GM12878 (cell line): ENCODE measurements at regions of chr2 and their contacts with region 1.

Region 1: DNA sequence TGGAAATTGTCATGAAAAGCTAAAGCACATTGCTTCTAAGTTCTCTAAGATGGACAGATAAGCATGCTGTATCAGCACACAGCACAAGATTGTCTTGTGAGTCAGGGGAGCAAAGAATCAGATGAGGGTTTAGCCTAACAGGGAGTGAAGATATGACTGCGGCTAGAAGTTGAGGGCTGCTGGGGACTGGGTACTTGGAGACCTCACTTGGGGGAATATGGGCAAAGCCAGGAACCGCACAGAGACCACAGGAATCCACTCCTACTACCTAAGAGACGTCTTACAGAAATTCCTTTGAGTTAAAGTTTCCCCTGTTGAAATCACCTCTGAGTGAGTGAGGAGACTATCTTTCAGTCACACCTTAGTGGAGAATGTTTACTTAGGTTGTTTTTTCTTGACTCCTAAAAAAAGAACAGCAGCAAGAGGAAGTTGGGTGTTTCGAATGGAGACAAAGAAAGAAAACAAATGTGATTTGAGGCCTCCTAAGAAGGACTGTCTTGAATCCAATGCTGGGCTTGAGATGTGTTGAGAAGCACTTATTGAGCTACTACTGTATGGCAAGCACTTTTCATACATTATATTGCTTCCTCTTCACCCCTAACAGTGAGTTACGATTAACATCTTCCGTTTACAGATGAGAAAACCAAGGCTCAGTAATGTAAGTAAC is 100.7 kb downstream of the ANKRD44 start:
- DNase-seq: peak; percentile 76
- ATAC-seq: peak; percentile 47
- H3K4me3 ChIP-seq: peak overlapping the region; percentile 28
- H3K27ac ChIP-seq: peak overlapping the region; percentile 97
- H3K4me1 ChIP-seq: peaks cover 94% of the 10 kb centered on the region
- H3K27me3 ChIP-seq: no peaks in the 10 kb centered on the region
- CTCF ChIP-seq: no peak
- EP300 ChIP-seq: peak in 1 of 2 experiments; percentile 21; a peak in 2 of 4 replicates
- POLR2A ChIP-seq: no peak
- RAD21 ChIP-seq: no peak

Region 2: DNA sequence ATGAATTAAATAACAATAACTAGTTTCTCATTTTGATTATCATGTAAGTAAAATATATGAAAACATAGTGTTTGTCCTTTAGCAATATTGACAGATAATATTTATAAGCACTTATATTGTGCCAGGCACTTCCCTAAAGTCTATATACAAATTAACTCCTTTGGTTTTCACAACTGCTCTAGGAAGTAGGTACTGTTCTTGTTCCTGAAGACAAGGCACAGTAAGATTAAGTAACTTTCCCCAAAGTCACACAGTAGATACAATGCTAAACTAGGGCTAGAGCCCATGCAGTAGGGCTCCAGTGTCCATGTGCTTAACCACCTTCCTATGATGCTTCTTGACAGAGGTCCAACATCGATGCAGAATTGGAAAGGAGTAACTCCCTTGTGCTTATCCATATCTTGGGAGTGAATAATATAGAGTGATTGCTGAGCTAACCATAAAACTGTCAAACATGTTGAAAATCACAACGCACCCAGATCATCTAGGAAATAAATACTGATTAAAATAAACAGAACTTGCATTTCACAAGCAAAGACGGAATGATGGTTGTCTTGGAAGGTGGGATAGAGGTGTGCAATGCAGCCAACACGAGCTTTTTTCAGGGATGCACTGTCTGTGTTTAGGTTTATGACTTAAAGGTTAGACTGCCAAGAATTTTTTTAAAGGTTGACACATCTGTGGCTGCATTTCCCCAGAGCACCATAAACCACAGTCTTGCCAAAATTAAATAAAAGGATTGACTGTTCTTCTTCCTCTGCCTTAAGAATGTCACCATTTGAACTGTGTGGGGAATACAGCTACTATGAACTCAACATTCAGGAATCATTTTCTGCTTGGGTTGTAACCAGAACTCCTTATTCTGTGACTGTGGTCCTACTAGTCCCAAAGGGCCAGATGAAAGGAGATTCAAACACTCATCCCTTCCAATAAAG is 19.9 kb after region 1 on chr2:
- CTCF ChIA-PET with region 1: interaction called, 6 read pairs
- POLR2A ChIA-PET with region 1: interaction called, 4 read pairs
- RAD21 ChIA-PET with region 1: no interaction called
- SMC1A ChIA-PET with region 1: interaction called, 175 read pairs
- in situ Hi-C with region 1: no loop called
- intact Hi-C with region 1: no loop called
- DNase-seq: no peak
- ATAC-seq: no peak
- H3K4me3 ChIP-seq: no peak overlapping the region
- H3K27ac ChIP-seq: no peak overlapping the region
- H3K4me1 ChIP-seq: no peaks in the 10 kb centered on the region
- H3K27me3 ChIP-seq: no peaks in the 10 kb centered on the region
- CTCF ChIP-seq: no peak
- EP300 ChIP-seq: no peak
- POLR2A ChIP-seq: no peak
- RAD21 ChIP-seq: no peak

Region 3: GRCh38 chr2:197248623-197249022 is 38.7 kb after region 1 on chr2:
- CTCF ChIA-PET with region 1: interaction called, 6 read pairs
- POLR2A ChIA-PET with region 1: interaction called, 6 read pairs
- RAD21 ChIA-PET with region 1: interaction called, 9 read pairs
- SMC1A ChIA-PET with region 1: interaction called, 13 read pairs
- in situ Hi-C with region 1: no loop called
- intact Hi-C with region 1: no loop called
- DNase-seq: no peak
- ATAC-seq: peak; percentile 45
- H3K4me3 ChIP-seq: no peak overlapping the region
- H3K27ac ChIP-seq: peak overlapping the region; percentile 76
- H3K4me1 ChIP-seq: peaks cover 19% of the 10 kb centered on the region
- H3K27me3 ChIP-seq: no peaks in the 10 kb centered on the region
- CTCF ChIP-seq: no peak
- EP300 ChIP-seq: no peak
- POLR2A ChIP-seq: no peak
- RAD21 ChIP-seq: no peak

Region 4: GRCh38 chr2:197261808-197262226 is 51.9 kb after region 1 on chr2:
- CTCF ChIA-PET with region 1: interaction called, 15 read pairs
- POLR2A ChIA-PET with region 1: interaction called, 43 read pairs
- RAD21 ChIA-PET with region 1: interaction called, 61 read pairs
- SMC1A ChIA-PET with region 1: interaction called, 82 read pairs
- in situ Hi-C with region 1: no loop called
- intact Hi-C with region 1: loop called (anchors 2 kb)
- DNase-seq: peak; percentile 91
- ATAC-seq: peak; percentile 67
- H3K4me3 ChIP-seq: peak overlapping the region; percentile 12; the same call in 1 of the 2 replicates
- H3K27ac ChIP-seq: peak overlapping the region; percentile 87
- H3K4me1 ChIP-seq: peaks cover 63% of the 10 kb centered on the region
- H3K27me3 ChIP-seq: no peaks in the 10 kb centered on the region
- CTCF ChIP-seq: no peak
- EP300 ChIP-seq: peak in 1 of 2 experiments; percentile 77; a peak in 3 of 4 replicates
- POLR2A ChIP-seq: peak; percentile 38
- RAD21 ChIP-seq: no peak

Region 5: GRCh38 chr2:197304556-197305011 is 94.7 kb after region 1 on chr2:
- CTCF ChIA-PET with region 1: interaction called, 34 read pairs
- POLR2A ChIA-PET with region 1: interaction called, 80 read pairs
- RAD21 ChIA-PET with region 1: interaction called, 408 read pairs
- SMC1A ChIA-PET with region 1: interaction called, 433 read pairs
- in situ Hi-C with region 1: no loop called
- intact Hi-C with region 1: no loop called
- DNase-seq: no peak
- ATAC-seq: peak; percentile 43
- H3K4me3 ChIP-seq: peak overlapping the region; percentile 67
- H3K27ac ChIP-seq: peak overlapping the region; percentile 99
- H3K4me1 ChIP-seq: peaks cover 62% of the 10 kb centered on the region
- H3K27me3 ChIP-seq: no peaks in the 10 kb centered on the region
- CTCF ChIP-seq: no peak
- EP300 ChIP-seq: no peak
- POLR2A ChIP-seq: peak; percentile 34; the same call in 1 of the 2 replicates
- RAD21 ChIP-seq: no peak